ENCODE measurements at regions of chr7 and their contacts with region 1.

Region 1: DNA sequence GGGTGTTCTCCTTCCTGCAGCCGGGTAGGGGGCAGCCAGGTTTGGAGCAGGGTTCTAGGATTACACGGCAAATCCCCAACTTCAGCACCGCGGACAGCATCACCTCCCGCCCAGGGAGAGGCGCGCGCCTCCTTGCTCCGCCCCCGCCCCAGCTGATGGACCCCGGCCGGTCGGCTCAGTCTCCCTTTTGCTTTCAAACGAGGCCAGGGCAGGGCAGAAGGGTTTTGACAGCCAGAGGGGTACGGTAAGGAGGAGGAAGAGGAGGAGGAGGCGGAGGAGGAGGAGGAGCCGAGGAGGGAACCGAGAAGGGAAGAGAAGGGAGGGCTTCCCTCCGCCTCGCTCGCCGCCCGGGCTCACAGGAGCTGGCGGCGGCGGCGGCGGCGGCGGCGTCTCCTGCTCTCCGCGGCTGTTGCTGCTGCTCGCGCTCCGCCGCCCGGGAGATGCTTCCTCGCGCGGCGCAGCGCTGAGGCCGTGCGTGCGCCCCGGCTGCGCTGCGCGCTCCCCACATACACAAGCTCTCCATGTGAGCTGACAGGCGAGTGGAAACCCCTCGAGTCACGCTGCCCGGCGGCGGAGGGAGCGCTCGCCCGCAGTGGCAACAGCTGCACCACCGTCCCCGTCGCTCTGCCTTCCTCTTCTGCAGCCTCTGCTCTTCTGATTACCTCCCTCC is 615 bp upstream of the CNTNAP2 start:
- DNase-seq: peak; percentile 76 to 97
- H3K4me3 ChIP-seq: peak overlapping the region; percentile 64 to 70 (median 66)
- H3K27ac ChIP-seq: no peak overlapping the region
- H3K4me1 ChIP-seq: peaks cover 0 to 7% (median 1%) of the 10 kb centered on the region in 4 experiments; a peak in 5 of 7 replicates
- H3K27me3 ChIP-seq: peaks cover 0 to 9% (median 3%) of the 10 kb centered on the region in 4 experiments; a peak in 3 of 7 replicates
- CTCF ChIP-seq: peak; percentile 23 to 34 (median 29); a peak in 3 of 4 replicates
- EP300 ChIP-seq: peak; percentile 27 to 58; a peak in 2 of 3 replicates
- POLR2A ChIP-seq: no peak
- RAD21 ChIP-seq: peak; percentile 28 to 48; a peak in 3 of 4 replicates

Region 2: DNA sequence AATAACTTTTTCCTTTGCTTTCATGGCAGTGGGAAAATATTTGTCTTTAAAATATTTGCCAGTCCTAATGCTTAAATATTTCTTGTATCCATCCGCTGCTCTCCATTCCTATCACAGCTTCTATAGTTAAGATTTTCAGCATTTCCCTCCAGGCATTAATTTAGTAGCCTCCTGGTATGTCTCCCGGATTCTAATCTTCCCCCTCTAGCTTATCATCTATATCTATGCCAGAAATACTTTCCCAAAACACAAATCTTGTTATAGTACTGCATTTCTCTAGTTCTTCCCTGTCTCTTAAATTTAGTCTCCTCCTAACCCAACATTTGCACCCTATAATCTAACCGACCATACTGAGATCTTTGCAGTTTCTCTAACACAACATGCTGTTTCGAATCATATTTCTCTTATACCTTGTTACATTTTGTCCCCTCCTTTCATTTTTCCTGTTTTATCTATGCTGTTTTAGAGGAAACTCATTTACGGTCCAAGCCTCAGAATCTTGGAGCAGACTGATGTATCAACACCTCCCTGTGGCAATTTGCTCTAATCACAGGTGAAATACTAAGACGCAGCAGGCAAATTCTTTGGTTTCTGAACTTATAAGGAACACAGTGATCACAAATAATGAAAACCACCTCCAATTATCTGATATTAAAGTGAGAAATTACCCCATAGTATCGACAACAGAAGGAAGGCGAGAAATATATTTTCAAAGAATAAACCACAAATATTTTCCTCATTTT is 11.0 kb after region 1 on chr7:
- CTCF ChIA-PET with region 1: interaction called, 14 read pairs
- POLR2A ChIA-PET with region 1: interaction called, 5 read pairs
- DNase-seq: no peak
- H3K4me3 ChIP-seq: no peak overlapping the region
- H3K27ac ChIP-seq: no peak overlapping the region
- H3K4me1 ChIP-seq: no peaks in the 10 kb centered on the region
- H3K27me3 ChIP-seq: no peaks in the 10 kb centered on the region
- CTCF ChIP-seq: peak in 2 of 3 experiments; percentile 18 to 25; a peak in 2 of 4 replicates
- EP300 ChIP-seq: no peak
- POLR2A ChIP-seq: no peak
- RAD21 ChIP-seq: peak; percentile 39 to 43; a peak in 3 of 4 replicates

Measured in H1 (cell line).